B cell (primary cell): ENCODE measurements at regions of chr1 and their contacts with region 1.

Region 1: DNA sequence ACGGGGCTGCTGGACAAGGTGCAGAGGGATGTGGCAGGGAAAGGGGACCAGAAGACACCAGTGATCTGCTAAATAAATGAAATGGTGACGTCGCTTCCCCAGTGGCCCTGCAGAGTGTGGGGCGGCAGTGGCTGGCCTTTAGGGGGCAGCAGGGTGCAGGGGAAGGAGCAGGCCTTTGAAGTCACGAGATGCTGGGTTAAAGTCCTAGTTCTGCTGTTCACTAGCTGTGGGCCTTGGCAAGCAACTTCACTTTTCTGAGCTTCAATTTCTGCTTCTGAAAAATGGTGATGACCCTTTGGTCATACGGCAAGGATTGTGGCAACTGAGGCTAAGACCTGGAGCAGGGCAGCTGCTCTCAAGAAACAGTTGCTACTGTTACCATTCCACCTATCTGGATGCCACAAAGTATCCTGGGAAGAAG is 9.2 kb upstream of the GALE start:
- DNase-seq: peak; percentile 90
- ATAC-seq: peak; percentile 89
- H3K4me3 ChIP-seq: peak overlapping the region in 1 of 5 experiments; percentile 29
- H3K4me3 Mint-ChIP-seq: no peak overlapping the region
- H3K27ac ChIP-seq: peak overlapping the region; percentile 53 to 73
- H3K27ac Mint-ChIP-seq: peak overlapping the region; percentile 84
- H3K4me1 ChIP-seq: peaks cover 18 to 21% of the 10 kb centered on the region in 2 donors
- H3K4me1 Mint-ChIP-seq: peaks cover 26% of the 10 kb centered on the region
- H3K27me3 ChIP-seq: no peaks in the 10 kb centered on the region
- H3K27me3 Mint-ChIP-seq: no peaks in the 10 kb centered on the region
- CTCF ChIP-seq: peak; percentile 78

Region 2: GRCh38 chr1:23772049-23772853 is 37.5 kb before region 1 on chr1:
- CTCF ChIA-PET with region 1: interaction called, 30 read pairs
- POLR2A ChIA-PET with region 1: no interaction called
- intact Hi-C with region 1: loop called (anchors 5 kb)
- DNase-seq: peak; percentile 86
- ATAC-seq: peak; percentile 100
- H3K4me3 ChIP-seq: no peak overlapping the region
- H3K4me3 Mint-ChIP-seq: no peak overlapping the region
- H3K27ac ChIP-seq: no peak overlapping the region
- H3K27ac Mint-ChIP-seq: no peak overlapping the region
- H3K4me1 ChIP-seq: peaks cover 4 to 5% of the 10 kb centered on the region in 2 donors
- H3K4me1 Mint-ChIP-seq: peaks cover 9% of the 10 kb centered on the region
- H3K27me3 ChIP-seq: no peaks in the 10 kb centered on the region
- H3K27me3 Mint-ChIP-seq: no peaks in the 10 kb centered on the region
- CTCF ChIP-seq: peak; percentile 92

Region 3: DNA sequence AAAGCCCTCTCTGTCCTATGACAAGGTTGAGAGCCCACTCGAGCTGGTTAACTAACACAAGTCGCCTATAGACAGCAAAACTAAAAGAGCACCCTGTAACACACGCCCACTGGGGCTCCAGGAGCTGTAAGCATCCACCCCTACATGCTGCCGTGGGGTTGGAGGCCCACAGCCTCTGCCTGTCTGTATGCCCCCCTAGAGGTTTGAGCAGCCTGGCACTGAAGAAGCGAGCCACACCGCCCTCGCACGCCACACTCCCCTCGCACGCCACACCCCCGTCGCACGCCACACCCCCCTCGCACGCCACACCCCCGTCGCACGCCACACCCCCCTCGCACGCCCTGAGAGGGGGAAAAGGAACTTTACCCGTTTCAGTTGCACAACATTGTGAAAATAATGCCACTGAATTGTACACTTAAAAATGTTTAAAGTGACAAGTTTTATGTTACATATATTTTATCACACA is 28.7 kb after region 1 on chr1:
- CTCF ChIA-PET with region 1: interaction called, 15 read pairs
- POLR2A ChIA-PET with region 1: interaction called, 5 read pairs
- intact Hi-C with region 1: loop called (anchors 2 kb)
- DNase-seq: peak; percentile 89
- ATAC-seq: peak; percentile 100
- H3K4me3 ChIP-seq: peak overlapping the region in 4 of 5 experiments; percentile 19 to 60 (median 40)
- H3K4me3 Mint-ChIP-seq: peak overlapping the region; percentile 88
- H3K27ac ChIP-seq: no peak overlapping the region
- H3K27ac Mint-ChIP-seq: peak overlapping the region; percentile 83
- H3K4me1 ChIP-seq: peaks cover 6 to 7% of the 10 kb centered on the region in 2 donors
- H3K4me1 Mint-ChIP-seq: peaks cover 11% of the 10 kb centered on the region
- H3K27me3 ChIP-seq: no peaks in the 10 kb centered on the region
- H3K27me3 Mint-ChIP-seq: no peaks in the 10 kb centered on the region
- CTCF ChIP-seq: peak; percentile 3

Region 4: GRCh38 chr1:23862640-23863039 is 52.9 kb after region 1 on chr1:
- CTCF ChIA-PET with region 1: interaction called, 40 read pairs
- POLR2A ChIA-PET with region 1: interaction called, 3 read pairs
- intact Hi-C with region 1: no loop called
- DNase-seq: no peak
- ATAC-seq: no peak
- H3K4me3 ChIP-seq: no peak overlapping the region
- H3K4me3 Mint-ChIP-seq: no peak overlapping the region
- H3K27ac ChIP-seq: no peak overlapping the region
- H3K27ac Mint-ChIP-seq: no peak overlapping the region
- H3K4me1 ChIP-seq: peaks cover 8 to 9% of the 10 kb centered on the region in 2 donors
- H3K4me1 Mint-ChIP-seq: peaks cover 20% of the 10 kb centered on the region
- H3K27me3 ChIP-seq: no peaks in the 10 kb centered on the region
- H3K27me3 Mint-ChIP-seq: no peaks in the 10 kb centered on the region
- CTCF ChIP-seq: no peak

Region 5: GRCh38 chr1:23902321-23903278 is 92.8 kb after region 1 on chr1:
- CTCF ChIA-PET with region 1: interaction called, 40 read pairs
- POLR2A ChIA-PET with region 1: interaction called, 8 read pairs
- intact Hi-C with region 1: no loop called
- DNase-seq: no peak
- ATAC-seq: peak; percentile 26
- H3K4me3 ChIP-seq: peak overlapping the region in 2 of 5 experiments; percentile 22 to 27
- H3K4me3 Mint-ChIP-seq: peak overlapping the region; percentile 61
- H3K27ac ChIP-seq: peak overlapping the region in 1 of 2 donors; percentile 43
- H3K27ac Mint-ChIP-seq: peak overlapping the region; percentile 73
- H3K4me1 ChIP-seq: peaks cover 77 to 86% of the 10 kb centered on the region in 2 donors
- H3K4me1 Mint-ChIP-seq: peaks cover 74% of the 10 kb centered on the region
- H3K27me3 ChIP-seq: no peaks in the 10 kb centered on the region
- H3K27me3 Mint-ChIP-seq: no peaks in the 10 kb centered on the region
- CTCF ChIP-seq: no peak

Region 6: DNA sequence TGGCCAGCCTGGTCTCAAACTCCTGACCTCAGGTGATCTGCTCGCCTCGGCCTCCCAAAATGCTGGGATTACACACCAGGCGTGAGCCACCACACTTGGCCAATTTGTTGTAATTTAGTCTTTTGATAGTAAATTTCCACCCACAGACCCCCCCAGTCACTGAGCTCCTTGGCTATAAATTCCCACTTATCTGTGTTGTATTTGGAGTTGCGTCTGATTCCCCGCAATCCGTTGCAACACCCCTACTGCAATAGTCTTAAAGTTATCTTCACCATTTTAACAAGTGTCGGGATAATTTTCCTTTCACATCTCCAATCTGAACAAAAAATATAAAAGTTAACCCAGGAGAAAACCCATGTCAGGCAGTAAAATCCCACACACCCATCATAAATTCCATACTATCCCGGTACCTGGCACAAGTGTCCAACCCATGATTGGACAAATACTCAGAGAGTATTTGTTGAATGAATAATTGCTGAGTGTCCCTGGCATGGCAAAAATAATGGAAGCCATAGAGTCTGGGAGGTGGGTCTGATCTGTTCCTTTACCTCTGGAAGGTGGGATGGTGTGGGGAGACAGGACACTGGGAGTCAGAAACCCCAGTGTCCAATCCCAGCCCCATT is 112.7 kb after region 1 on chr1:
- CTCF ChIA-PET with region 1: interaction called, 199 read pairs
- POLR2A ChIA-PET with region 1: interaction called, 9 read pairs
- intact Hi-C with region 1: no loop called
- DNase-seq: no peak
- ATAC-seq: no peak
- H3K4me3 ChIP-seq: no peak overlapping the region
- H3K4me3 Mint-ChIP-seq: no peak overlapping the region
- H3K27ac ChIP-seq: no peak overlapping the region
- H3K27ac Mint-ChIP-seq: peak overlapping the region; percentile 28
- H3K4me1 ChIP-seq: peaks cover 12 to 22% of the 10 kb centered on the region in 2 donors
- H3K4me1 Mint-ChIP-seq: peaks cover 17% of the 10 kb centered on the region
- H3K27me3 ChIP-seq: no peaks in the 10 kb centered on the region
- H3K27me3 Mint-ChIP-seq: no peaks in the 10 kb centered on the region
- CTCF ChIP-seq: no peak

Region 7: DNA sequence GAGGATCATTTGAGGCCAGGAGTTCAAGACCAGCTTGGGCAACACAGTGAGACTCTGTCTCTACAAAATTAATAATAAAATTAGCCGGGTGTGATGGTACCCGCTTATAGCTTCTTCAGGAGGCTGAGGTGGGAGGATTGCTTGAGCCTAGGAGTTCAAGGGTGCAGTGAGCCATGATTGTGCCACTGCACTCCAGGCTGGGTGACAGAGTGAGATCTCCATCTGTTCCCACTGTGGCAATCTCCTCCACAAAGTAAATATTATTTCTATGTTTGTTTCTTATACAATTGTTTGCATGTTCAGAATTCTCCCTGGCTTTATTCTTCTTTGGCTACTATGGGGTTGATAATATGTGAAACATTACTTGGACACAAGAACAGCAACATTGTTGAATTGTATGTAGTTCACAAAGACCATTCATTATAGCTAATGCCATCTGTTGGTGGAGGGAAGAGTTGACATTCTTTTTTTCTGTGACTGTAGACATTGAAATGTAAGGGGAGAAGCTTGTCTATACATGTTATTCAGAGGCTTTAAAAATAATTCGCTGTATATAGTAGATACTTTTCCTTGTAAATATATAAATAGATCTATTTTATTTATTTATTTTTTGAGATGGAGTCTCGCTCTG is 218.2 kb after region 1 on chr1:
- CTCF ChIA-PET with region 1: interaction called, 28 read pairs
- POLR2A ChIA-PET with region 1: no interaction called
- intact Hi-C with region 1: no loop called
- DNase-seq: peak; percentile 37
- ATAC-seq: no peak
- H3K4me3 ChIP-seq: no peak overlapping the region
- H3K4me3 Mint-ChIP-seq: no peak overlapping the region
- H3K27ac ChIP-seq: no peak overlapping the region
- H3K27ac Mint-ChIP-seq: no peak overlapping the region
- H3K4me1 ChIP-seq: no peaks in the 10 kb centered on the region
- H3K4me1 Mint-ChIP-seq: peaks cover 5% of the 10 kb centered on the region
- H3K27me3 ChIP-seq: no peaks in the 10 kb centered on the region
- H3K27me3 Mint-ChIP-seq: no peaks in the 10 kb centered on the region
- CTCF ChIP-seq: peak; percentile 50

Region 8: GRCh38 chr1:24111996-24112779 is 302.4 kb after region 1 on chr1 and contains the start of gene MYOM3:
- CTCF ChIA-PET with region 1: no interaction called
- POLR2A ChIA-PET with region 1: no interaction called
- intact Hi-C with region 1: no loop called
- DNase-seq: peak; percentile 50
- ATAC-seq: peak; percentile 68
- H3K4me3 ChIP-seq: peak within 1 kb of the TSS in 1 of 5 experiments; percentile 9
- H3K4me3 Mint-ChIP-seq: peak within 1 kb of the TSS; percentile 19
- H3K27ac ChIP-seq: no peak within 1 kb of the TSS
- H3K27ac Mint-ChIP-seq: no peak within 1 kb of the TSS
- H3K4me1 ChIP-seq: peaks cover 5 to 8% of the 10 kb centered on the region in 2 donors
- H3K4me1 Mint-ChIP-seq: peaks cover 8% of the 10 kb centered on the region
- H3K27me3 ChIP-seq: peaks cover 0 to 28% (median 2%) of the 10 kb centered on the region in 4 experiments
- H3K27me3 Mint-ChIP-seq: peaks cover 25% of the 10 kb centered on the region
- CTCF ChIP-seq: no peak
- total RNA-seq, gene MYOM3: not detected in 2 replicates